Cardiac septum (tissue), 1 donor: ENCODE measurements at regions of chr2 and their contacts with region 1.

Region 1: GRCh38 chr2:66574701-66575624 is 140.0 kb downstream of the MEIS1 start:
- DNase-seq: no peak

Region 2: GRCh38 chr2:66429071-66429477 is 145.9 kb before region 1 on chr2:
- intact Hi-C with region 1: loop called (anchors 2 kb)
- DNase-seq: no peak

Region 3: GRCh38 chr2:66434679-66435548 is 140.0 kb before region 1 on chr2 and contains the start of gene MEIS1:
- intact Hi-C with region 1: loop called (anchors 2 kb)
- DNase-seq: peak; percentile 94
- total RNA-seq, gene MEIS1: 24.7 TPM

Region 4: GRCh38 chr2:66445925-66446860 is 128.8 kb before region 1 on chr2:
- intact Hi-C with region 1: loop called (anchors 1 kb)
- DNase-seq: no peak

Region 5: DNA sequence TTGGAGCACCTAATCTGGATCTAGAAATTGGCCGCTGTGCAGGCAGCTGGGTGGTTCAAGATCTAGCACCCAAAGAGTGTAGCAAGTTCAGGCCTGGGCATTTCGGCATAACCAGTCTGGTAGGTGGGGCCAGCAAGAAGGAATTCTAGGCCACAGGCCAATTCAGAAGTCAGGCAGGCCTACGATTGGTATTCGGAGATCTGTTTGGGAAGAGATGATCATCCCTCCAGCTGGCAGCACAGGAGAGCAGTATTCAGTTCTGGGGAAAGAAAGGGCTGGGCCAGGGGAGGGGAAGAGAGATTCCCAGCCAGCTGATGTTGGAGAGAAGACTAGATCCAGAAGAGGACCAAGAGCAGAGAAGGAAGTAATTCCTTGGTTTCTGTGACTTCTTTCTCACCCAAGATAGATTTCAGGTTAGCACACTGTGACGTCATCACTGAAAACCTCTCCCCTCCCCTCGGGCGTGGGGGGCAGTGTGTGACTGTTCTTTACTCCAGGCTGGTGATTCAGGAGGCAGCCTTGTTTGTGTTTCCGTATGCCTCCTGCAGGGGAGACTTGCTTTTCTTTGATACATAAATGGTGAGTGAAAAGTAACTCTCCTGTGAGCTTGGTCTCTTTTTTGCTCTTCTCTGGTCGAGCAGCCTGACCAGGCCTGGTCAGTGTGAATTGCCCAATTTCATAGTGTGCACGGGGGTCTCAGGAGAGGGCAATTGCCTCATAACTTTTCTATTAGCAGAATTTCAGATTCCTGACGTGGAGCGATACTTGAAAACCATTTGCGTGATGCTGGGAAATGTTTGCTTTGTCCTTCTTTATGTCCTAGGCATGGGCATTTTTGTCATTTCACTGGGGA is 78.9 kb before region 1 on chr2:
- intact Hi-C with region 1: loop called (anchors 5 kb)
- DNase-seq: peak; percentile 75

Region 6: GRCh38 chr2:67259581-67260342 is 684.8 kb after region 1 on chr2:
- intact Hi-C with region 1: no loop called
- DNase-seq: no peak

Region 7: GRCh38 chr2:67322353-67323001 is 747.5 kb after region 1 on chr2:
- intact Hi-C with region 1: loop called (anchors 5 kb)
- DNase-seq: no peak

Region 8: DNA sequence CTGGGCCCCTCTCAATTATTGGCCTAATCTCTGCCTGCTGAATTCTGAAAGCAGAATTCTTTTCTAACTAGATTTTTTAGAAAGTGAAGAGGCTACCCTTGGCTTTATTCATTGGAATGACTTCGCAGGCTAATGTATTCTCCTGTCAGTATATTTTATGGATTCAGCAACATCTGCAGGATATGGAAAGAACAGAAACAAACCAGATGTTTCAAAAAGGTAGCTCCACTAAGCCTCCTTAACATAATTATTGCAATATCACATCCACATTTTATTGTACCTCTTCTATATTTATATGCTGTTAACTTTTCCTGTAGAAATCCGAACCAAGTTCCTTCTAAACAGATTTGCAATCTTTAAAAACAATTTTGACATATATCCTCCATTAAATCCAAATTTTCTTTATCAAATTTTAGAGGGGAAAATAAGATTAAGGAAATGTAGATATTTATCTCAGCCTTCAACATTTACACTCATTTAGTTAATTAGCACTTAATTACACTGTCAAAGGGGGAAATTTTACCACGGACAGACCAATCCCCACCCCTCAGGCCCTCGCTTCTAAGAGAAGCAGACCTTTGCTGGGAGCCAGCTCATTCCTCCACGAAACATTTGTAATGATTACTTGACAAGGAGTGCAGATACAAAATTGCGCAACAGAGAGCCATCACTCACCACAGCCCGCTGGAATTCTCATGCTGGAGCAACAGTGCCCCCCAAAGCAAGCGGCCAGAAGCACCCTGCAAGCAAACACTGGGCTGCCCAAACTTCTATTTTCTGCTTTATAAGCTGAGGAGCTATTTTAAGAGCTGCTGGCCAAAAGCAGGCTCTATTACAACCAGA is 1075.5 kb after region 1 on chr2:
- intact Hi-C with region 1: loop called (anchors 2 kb)
- DNase-seq: peak; percentile 90